ENCODE measurements at regions of chr2 and their contacts with region 1.

Region 1: GRCh38 chr2:190648289-190649034 is 421 bp upstream of the NAB1 start:
- DNase-seq: peak; percentile 84
- H3K4me3 Mint-ChIP-seq: peak overlapping the region; percentile 78
- H3K27ac Mint-ChIP-seq: peak overlapping the region; percentile 82
- H3K4me1 Mint-ChIP-seq: peaks cover 48% of the 10 kb centered on the region
- H3K27me3 Mint-ChIP-seq: no peaks in the 10 kb centered on the region

Region 2: DNA sequence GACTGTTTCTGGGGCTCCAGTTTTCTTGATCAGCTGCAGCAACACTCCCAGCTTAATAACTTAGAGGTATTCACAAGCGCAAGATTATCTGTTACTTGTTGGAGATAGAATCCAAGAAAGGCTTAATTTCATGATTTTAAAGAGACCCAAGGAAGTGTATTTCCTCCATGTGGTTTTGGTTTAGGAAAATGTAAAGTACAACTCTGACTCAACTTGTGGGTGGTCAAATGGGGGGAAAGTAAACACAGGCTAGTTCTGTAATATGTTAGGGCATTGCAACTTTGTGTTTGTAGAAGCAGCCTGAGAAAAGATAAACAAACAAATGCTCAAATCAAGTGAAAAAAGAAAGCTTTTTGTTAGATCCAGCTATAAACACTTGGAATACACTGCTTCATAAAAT is 1764.4 kb before region 1 on chr2:
- intact Hi-C with region 1: no loop called
- DNase-seq: no peak
- H3K4me3 Mint-ChIP-seq: no peak overlapping the region
- H3K27ac Mint-ChIP-seq: no peak overlapping the region
- H3K4me1 Mint-ChIP-seq: no peaks in the 10 kb centered on the region
- H3K27me3 Mint-ChIP-seq: no peaks in the 10 kb centered on the region

Region 3: GRCh38 chr2:190382851-190383250 is 265.6 kb before region 1 on chr2:
- intact Hi-C with region 1: loop called (anchors 2 kb)
- DNase-seq: peak; percentile 32
- H3K4me3 Mint-ChIP-seq: no peak overlapping the region
- H3K27ac Mint-ChIP-seq: no peak overlapping the region
- H3K4me1 Mint-ChIP-seq: peaks cover 9% of the 10 kb centered on the region
- H3K27me3 Mint-ChIP-seq: peaks cover 2% of the 10 kb centered on the region

Region 4: DNA sequence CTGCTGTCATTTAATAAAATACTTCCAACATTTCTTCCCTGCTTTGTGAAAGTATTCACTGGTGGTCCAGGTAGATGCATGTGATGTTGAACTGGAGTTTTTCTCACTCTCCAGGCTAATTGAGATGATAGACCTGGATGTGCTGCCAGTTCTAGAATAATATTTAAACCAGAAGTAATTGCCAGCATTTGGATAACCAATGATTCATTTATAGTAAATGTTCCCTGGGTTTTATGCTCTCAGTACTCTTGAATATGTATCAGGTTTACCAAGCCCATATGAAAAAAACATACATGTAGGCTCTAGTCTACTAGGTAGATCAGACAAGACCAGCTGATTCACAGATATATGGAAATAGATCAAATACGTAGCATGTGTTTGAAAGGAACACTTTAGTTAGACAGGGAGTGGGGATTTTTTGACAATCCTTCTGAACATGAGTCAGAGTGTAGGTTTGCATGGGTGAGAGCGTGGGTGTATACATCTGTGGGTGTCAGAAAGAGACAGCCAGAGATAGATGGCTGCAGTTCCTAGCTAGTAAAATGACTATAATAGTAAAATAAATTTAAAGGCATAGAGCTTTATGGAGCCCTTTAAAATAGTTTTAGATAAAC is 115.5 kb after region 1 on chr2:
- intact Hi-C with region 1: loop called (anchors 1 kb)
- DNase-seq: no peak
- H3K4me3 Mint-ChIP-seq: peak overlapping the region; percentile 3
- H3K27ac Mint-ChIP-seq: peak overlapping the region; percentile 11
- H3K4me1 Mint-ChIP-seq: peaks cover 44% of the 10 kb centered on the region
- H3K27me3 Mint-ChIP-seq: no peaks in the 10 kb centered on the region